ENCODE measurements at regions of chr3 and their contacts with region 1.

Region 1: GRCh38 chr3:11820531-11821041 is 26.1 kb downstream of the TAMM41 start:
- DNase-seq: peak; percentile 31
- ATAC-seq: peak; percentile 53; the same call in 1 of the 2 replicates
- H3K4me3 ChIP-seq: no peak overlapping the region
- H3K27ac ChIP-seq: no peak overlapping the region
- H3K4me1 ChIP-seq: peaks cover 9% of the 10 kb centered on the region; the same call in 1 of the 2 replicates
- H3K27me3 ChIP-seq: no peaks in the 10 kb centered on the region
- CTCF ChIP-seq: no peak
- POLR2A ChIP-seq: no peak
- RAD21 ChIP-seq: no peak

Region 2: GRCh38 chr3:11155341-11156025 is 665.1 kb before region 1 on chr3:
- CTCF ChIA-PET with region 1: no interaction called
- POLR2A ChIA-PET with region 1: no interaction called
- dilution Hi-C with region 1: no loop called
- in situ Hi-C with region 1: no loop called
- intact Hi-C with region 1: no loop called
- DNase-seq: peak; percentile 89
- ATAC-seq: peak; percentile 74
- H3K4me3 ChIP-seq: peak overlapping the region; percentile 78
- H3K27ac ChIP-seq: peak overlapping the region; percentile 54
- H3K4me1 ChIP-seq: peaks cover 15% of the 10 kb centered on the region
- H3K27me3 ChIP-seq: no peaks in the 10 kb centered on the region
- CTCF ChIP-seq: peak; percentile 91
- POLR2A ChIP-seq: peak; percentile 52
- RAD21 ChIP-seq: peak; percentile 88

Region 3: DNA sequence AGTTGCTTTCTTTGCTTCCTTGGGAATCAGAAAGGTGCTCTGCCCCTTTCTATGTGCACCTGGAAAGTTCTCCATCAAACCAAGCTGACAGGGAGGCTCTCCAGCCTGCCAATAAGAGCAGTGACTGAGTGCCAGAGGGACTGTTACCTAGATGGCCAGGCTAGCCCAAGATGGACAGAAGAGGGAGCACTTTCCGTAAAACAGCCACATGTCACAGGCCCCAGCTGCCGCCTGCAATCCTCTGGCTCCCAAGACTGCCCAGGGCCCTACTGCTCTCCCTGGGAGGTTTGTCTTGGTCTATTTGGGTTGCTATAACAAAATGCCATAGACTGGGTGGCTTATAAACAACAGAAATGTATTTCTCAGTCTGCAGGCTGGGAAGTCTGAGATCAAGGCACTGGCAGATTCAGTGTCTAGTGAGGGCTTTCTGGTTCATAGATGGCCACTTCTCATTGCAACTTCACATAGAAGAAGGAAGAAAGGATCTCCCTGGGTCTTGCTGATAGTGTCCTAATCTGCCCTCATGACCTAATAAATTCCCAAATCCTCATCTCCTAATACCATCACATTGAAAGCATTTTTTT is 46.2 kb before region 1 on chr3:
- CTCF ChIA-PET with region 1: no interaction called
- POLR2A ChIA-PET with region 1: interaction called, 12 read pairs
- dilution Hi-C with region 1: no loop called
- in situ Hi-C with region 1: no loop called
- intact Hi-C with region 1: no loop called
- DNase-seq: peak; percentile 45
- ATAC-seq: peak; percentile 77
- H3K4me3 ChIP-seq: no peak overlapping the region
- H3K27ac ChIP-seq: no peak overlapping the region
- H3K4me1 ChIP-seq: peaks cover 4% of the 10 kb centered on the region
- H3K27me3 ChIP-seq: peaks cover 2% of the 10 kb centered on the region; the same call in 1 of the 2 replicates
- CTCF ChIP-seq: peak; percentile 50
- POLR2A ChIP-seq: no peak
- RAD21 ChIP-seq: peak; percentile 30; the same call in 1 of the 2 replicates